GM12878 (cell line): ENCODE measurements at regions of chr1 and their contacts with region 1.

Region 1: GRCh38 chr1:31910933-31911332 is 27.2 kb downstream of the PTP4A2 start:
- DNase-seq: peak; percentile 64
- ATAC-seq: peak; percentile 72
- H3K4me3 ChIP-seq: no peak overlapping the region
- H3K27ac ChIP-seq: no peak overlapping the region
- H3K4me1 ChIP-seq: peaks cover 29% of the 10 kb centered on the region
- H3K27me3 ChIP-seq: no peaks in the 10 kb centered on the region
- CTCF ChIP-seq: no peak
- EP300 ChIP-seq: peak in 1 of 2 experiments; percentile 73; a peak in 2 of 4 replicates
- POLR2A ChIP-seq: no peak
- RAD21 ChIP-seq: no peak

Region 2: DNA sequence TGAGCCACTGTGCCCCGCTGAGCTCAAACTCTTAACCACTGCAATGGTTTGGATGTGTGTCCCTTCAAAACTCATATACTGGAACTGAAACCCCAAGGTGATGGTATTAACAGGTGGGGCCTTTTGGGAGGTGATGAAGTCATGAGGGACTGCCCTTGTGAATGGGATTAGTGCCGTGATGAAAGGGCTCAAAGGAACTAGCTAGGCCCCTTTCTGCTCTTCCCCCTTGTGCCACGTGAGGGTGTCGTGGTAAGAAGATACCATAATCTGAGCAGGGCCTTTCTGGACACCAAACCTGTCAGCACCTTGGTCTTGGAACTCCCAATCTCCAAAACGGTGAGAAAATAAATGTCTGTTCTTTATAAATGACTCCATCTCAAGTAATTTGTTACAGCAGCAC is 49.6 kb before region 1 on chr1:
- CTCF ChIA-PET with region 1: no interaction called
- POLR2A ChIA-PET with region 1: interaction called, 3 read pairs
- RAD21 ChIA-PET with region 1: interaction called, 10 read pairs
- SMC1A ChIA-PET with region 1: interaction called, 6 read pairs
- in situ Hi-C with region 1: no loop called
- intact Hi-C with region 1: no loop called
- DNase-seq: peak; percentile 24
- ATAC-seq: peak; percentile 94
- H3K4me3 ChIP-seq: no peak overlapping the region
- H3K27ac ChIP-seq: no peak overlapping the region
- H3K4me1 ChIP-seq: peaks cover 6% of the 10 kb centered on the region
- H3K27me3 ChIP-seq: no peaks in the 10 kb centered on the region
- CTCF ChIP-seq: peak; percentile 48 to 55 (median 51)
- EP300 ChIP-seq: no peak
- POLR2A ChIP-seq: no peak
- RAD21 ChIP-seq: peak; percentile 84

Region 3: DNA sequence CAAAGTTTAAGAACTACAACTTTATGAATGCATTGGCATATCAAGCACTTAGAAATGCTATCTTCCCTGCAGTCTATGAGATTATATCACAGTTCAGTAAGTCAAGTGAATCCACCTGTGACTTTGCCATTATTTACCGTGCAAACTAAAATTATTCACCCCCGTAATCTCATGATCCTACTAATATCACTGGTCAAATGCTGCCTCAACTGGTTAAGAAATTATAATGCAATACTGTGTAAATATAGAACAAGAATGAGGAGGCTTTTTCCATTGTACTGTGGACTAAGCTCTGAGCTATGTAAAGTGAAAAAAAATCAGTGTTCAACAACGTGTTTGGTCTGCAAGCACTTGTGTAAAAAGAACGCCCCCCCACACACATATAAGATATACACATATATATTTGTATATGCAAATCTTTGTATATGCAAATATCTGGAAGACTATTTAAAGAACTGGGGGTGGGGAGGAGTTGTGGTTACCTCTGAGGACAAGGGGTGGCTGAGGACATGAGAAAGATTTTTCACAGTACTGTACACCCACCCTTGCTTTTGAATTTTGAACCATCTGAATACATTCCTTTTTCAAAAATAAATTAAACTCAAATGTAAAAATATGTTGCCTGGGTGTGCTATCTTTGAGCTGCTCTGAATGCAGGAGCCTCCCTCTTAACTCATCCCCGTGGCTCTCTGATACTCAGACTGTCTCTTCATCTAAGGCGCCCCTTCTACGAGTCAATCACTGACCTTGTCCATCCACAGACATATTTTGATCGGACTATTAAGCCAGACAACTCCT is 29.8 kb before region 1 on chr1:
- CTCF ChIA-PET with region 1: interaction called, 4 read pairs
- POLR2A ChIA-PET with region 1: interaction called, 3 read pairs
- RAD21 ChIA-PET with region 1: interaction called, 6 read pairs
- SMC1A ChIA-PET with region 1: interaction called, 15 read pairs
- in situ Hi-C with region 1: no loop called
- intact Hi-C with region 1: no loop called
- DNase-seq: no peak
- ATAC-seq: peak; percentile 78
- H3K4me3 ChIP-seq: peak overlapping the region; percentile 39; the same call in 1 of the 2 replicates
- H3K27ac ChIP-seq: no peak overlapping the region
- H3K4me1 ChIP-seq: peaks cover 20% of the 10 kb centered on the region
- H3K27me3 ChIP-seq: no peaks in the 10 kb centered on the region
- CTCF ChIP-seq: no peak
- EP300 ChIP-seq: no peak
- POLR2A ChIP-seq: no peak
- RAD21 ChIP-seq: no peak

Region 4: DNA sequence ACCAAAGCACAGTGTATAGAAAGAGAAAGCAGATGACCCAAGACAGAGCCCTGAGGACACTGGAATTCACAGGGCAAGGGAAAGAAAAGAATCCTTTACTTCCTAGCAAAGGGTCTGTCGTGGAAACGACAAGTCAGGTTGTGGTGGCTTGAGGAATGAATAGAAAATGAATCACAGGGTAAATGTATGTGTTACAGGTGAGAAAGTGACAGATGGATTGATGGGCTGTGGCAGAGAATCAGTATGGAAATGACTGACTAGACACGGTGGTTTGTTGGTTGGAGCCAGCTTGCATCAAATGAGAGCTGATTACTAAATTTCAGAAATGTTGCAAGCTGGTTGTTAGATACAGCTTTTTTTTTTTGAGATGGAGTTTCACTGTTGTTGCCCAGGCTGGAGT is 19.7 kb before region 1 on chr1:
- CTCF ChIA-PET with region 1: interaction called, 6 read pairs
- POLR2A ChIA-PET with region 1: interaction called, 12 read pairs
- RAD21 ChIA-PET with region 1: interaction called, 7 read pairs
- SMC1A ChIA-PET with region 1: interaction called, 37 read pairs
- in situ Hi-C with region 1: no loop called
- intact Hi-C with region 1: no loop called
- DNase-seq: peak; percentile 82
- ATAC-seq: peak; percentile 85
- H3K4me3 ChIP-seq: no peak overlapping the region
- H3K27ac ChIP-seq: peak overlapping the region; percentile 17; the same call in 1 of the 2 replicates
- H3K4me1 ChIP-seq: peaks cover 22% of the 10 kb centered on the region
- H3K27me3 ChIP-seq: no peaks in the 10 kb centered on the region
- CTCF ChIP-seq: no peak
- EP300 ChIP-seq: peak; percentile 88 to 91
- POLR2A ChIP-seq: no peak
- RAD21 ChIP-seq: no peak

Region 5: GRCh38 chr1:31923901-31924535 is 13.1 kb after region 1 on chr1:
- CTCF ChIA-PET with region 1: interaction called, 19 read pairs
- POLR2A ChIA-PET with region 1: interaction called, 13 read pairs
- RAD21 ChIA-PET with region 1: interaction called, 5 read pairs
- SMC1A ChIA-PET with region 1: interaction called, 67 read pairs
- in situ Hi-C with region 1: no loop called
- intact Hi-C with region 1: no loop called
- DNase-seq: no peak
- ATAC-seq: 0 out of 3 replicates have a peak, but pooled peaks have one; percentile 11
- H3K4me3 ChIP-seq: peak overlapping the region; percentile 43; the same call in 1 of the 2 replicates
- H3K27ac ChIP-seq: 0 out of 2 replicates have a peak overlapping the region, but pooled peaks have one; percentile 27
- H3K4me1 ChIP-seq: peaks cover 19% of the 10 kb centered on the region
- H3K27me3 ChIP-seq: no peaks in the 10 kb centered on the region
- CTCF ChIP-seq: no peak
- EP300 ChIP-seq: no peak
- POLR2A ChIP-seq: no peak
- RAD21 ChIP-seq: no peak

Region 6: GRCh38 chr1:31931593-31932225 is 20.8 kb after region 1 on chr1:
- CTCF ChIA-PET with region 1: interaction called, 9 read pairs
- POLR2A ChIA-PET with region 1: interaction called, 25 read pairs
- RAD21 ChIA-PET with region 1: interaction called, 10 read pairs
- SMC1A ChIA-PET with region 1: interaction called, 67 read pairs
- in situ Hi-C with region 1: no loop called
- intact Hi-C with region 1: no loop called
- DNase-seq: no peak
- ATAC-seq: peak; percentile 4; the same call in 1 of the 3 replicates
- H3K4me3 ChIP-seq: peak overlapping the region; percentile 84
- H3K27ac ChIP-seq: peak overlapping the region; percentile 93
- H3K4me1 ChIP-seq: peaks cover 25% of the 10 kb centered on the region
- H3K27me3 ChIP-seq: no peaks in the 10 kb centered on the region
- CTCF ChIP-seq: no peak
- EP300 ChIP-seq: no peak
- POLR2A ChIP-seq: no peak
- RAD21 ChIP-seq: no peak

Region 7: DNA sequence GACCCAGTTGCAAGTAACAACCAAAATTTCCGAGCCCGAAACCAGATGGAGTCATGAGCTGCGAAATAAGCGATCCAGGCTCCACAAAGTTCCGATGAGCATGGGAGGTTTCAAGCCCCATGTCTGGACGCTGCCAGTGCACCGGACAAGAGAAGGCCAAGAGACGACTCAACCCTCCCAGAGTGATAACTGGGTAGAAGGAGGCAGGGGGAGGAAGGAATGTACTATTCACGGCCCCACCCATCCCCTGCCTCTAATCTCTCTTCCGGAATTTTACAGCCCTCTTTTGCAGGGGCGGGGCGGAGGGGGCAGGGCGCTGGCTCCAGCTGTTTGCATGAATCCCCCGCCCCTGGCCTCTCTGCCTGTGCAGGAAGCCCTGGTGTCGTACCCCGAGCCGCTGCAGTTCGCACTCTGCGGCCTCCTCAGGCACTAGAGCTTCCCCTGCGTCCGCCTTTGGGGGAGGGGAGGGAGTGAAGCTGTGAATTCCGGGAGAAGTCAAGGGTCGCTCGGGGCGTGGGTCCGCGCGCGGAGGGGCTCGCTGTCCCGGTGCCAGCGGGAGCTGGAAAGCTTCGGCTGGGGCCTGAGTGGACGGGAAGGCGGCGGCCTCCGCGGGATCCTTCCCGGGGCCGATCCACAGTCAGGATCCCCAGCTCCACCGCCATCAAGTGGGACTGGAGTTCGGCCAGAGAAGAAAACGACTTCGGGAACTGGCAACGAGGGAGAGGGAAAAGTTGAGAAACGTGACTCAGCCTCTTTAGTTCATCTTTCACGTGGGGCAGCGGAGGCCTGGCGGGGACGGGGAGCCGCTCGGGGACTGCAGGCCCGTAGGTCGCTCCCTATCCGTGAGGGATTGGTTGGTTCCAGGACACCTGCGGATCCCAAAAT is 33.5 kb after region 1 on chr1:
- CTCF ChIA-PET with region 1: interaction called, 8 read pairs
- POLR2A ChIA-PET with region 1: interaction called, 5 read pairs
- RAD21 ChIA-PET with region 1: interaction called, 15 read pairs
- SMC1A ChIA-PET with region 1: interaction called, 8 read pairs
- in situ Hi-C with region 1: no loop called
- intact Hi-C with region 1: no loop called
- DNase-seq: peak; percentile 75
- ATAC-seq: peak; percentile 85
- H3K4me3 ChIP-seq: peak overlapping the region; percentile 78
- H3K27ac ChIP-seq: peak overlapping the region; percentile 94
- H3K4me1 ChIP-seq: peaks cover 38% of the 10 kb centered on the region
- H3K27me3 ChIP-seq: no peaks in the 10 kb centered on the region
- CTCF ChIP-seq: no peak
- EP300 ChIP-seq: 0 out of 4 replicates have a peak, but pooled peaks of 1 of the 2 experiments have one; percentile 25
- POLR2A ChIP-seq: peak; percentile 99
- RAD21 ChIP-seq: no peak; the same call in 1 of the 2 replicates